ENCODE measurements at regions of chr3 and their contacts with region 1.

Region 1: GRCh38 chr3:9402410-9403228 is 5.2 kb downstream of the SETD5 start:
- DNase-seq: peak; percentile 48
- H3K4me3 Mint-ChIP-seq: peak overlapping the region; percentile 68
- H3K27ac Mint-ChIP-seq: peak overlapping the region; percentile 77
- H3K4me1 Mint-ChIP-seq: peaks cover 46% of the 10 kb centered on the region
- H3K27me3 Mint-ChIP-seq: no peaks in the 10 kb centered on the region
- CTCF ChIP-seq: no peak

Region 2: DNA sequence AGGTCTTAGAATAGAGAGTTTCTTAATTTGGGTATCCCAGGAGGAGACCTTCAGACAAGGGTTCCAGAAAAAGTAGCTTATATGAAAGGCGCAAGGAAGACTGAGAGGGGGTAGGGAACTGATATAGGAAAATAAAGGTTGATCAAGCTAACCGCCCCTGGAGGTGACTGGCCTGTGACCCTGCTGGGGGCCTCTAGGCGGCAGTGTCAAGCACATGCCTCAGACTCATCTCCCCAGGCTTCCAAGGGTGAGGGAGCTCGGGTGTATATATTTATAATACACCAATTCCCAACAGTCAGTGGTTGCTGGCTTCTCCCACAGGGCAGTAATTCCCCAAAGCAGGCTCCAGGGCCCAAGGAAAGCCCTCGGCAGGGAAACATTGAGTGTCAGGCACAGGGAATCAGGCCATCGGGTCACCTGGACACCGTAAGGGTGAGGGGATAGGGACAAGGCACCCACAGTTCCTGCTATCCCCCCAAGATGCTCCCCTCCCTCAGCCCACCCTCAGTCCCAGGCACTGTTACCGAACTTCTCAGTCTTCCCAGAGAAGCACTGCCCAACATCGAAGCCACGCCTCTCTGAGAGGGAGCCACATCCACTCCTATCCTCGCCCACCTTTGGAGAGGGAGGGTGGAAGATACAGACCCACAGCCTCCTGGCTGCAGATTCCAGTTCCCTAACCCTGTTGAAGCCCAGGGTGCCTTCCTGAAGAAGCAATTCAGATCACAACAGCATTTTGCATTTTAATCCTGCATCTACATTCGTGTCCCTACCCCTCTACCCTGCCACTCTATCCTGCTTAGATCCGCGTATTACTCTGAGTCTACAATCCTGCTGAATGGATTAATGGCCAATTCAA is 688.5 kb before region 1 on chr3:
- CTCF ChIA-PET with region 1: no interaction called
- POLR2A ChIA-PET with region 1: no interaction called
- intact Hi-C with region 1: no loop called
- DNase-seq: peak; percentile 47
- H3K4me3 Mint-ChIP-seq: no peak overlapping the region
- H3K27ac Mint-ChIP-seq: no peak overlapping the region
- H3K4me1 Mint-ChIP-seq: peaks cover 25% of the 10 kb centered on the region
- H3K27me3 Mint-ChIP-seq: no peaks in the 10 kb centered on the region
- CTCF ChIP-seq: peak; percentile 38

Region 3: GRCh38 chr3:9102240-9102981 is 300.2 kb before region 1 on chr3:
- CTCF ChIA-PET with region 1: no interaction called
- POLR2A ChIA-PET with region 1: no interaction called
- intact Hi-C with region 1: no loop called
- DNase-seq: no peak
- H3K4me3 Mint-ChIP-seq: no peak overlapping the region
- H3K27ac Mint-ChIP-seq: no peak overlapping the region
- H3K4me1 Mint-ChIP-seq: no peaks in the 10 kb centered on the region
- H3K27me3 Mint-ChIP-seq: no peaks in the 10 kb centered on the region
- CTCF ChIP-seq: no peak

Region 4: GRCh38 chr3:9135930-9136525 is 266.6 kb before region 1 on chr3:
- CTCF ChIA-PET with region 1: no interaction called
- POLR2A ChIA-PET with region 1: no interaction called
- intact Hi-C with region 1: no loop called
- DNase-seq: no peak
- H3K4me3 Mint-ChIP-seq: no peak overlapping the region
- H3K27ac Mint-ChIP-seq: no peak overlapping the region
- H3K4me1 Mint-ChIP-seq: peaks cover 4% of the 10 kb centered on the region
- H3K27me3 Mint-ChIP-seq: no peaks in the 10 kb centered on the region
- CTCF ChIP-seq: no peak

Region 5: DNA sequence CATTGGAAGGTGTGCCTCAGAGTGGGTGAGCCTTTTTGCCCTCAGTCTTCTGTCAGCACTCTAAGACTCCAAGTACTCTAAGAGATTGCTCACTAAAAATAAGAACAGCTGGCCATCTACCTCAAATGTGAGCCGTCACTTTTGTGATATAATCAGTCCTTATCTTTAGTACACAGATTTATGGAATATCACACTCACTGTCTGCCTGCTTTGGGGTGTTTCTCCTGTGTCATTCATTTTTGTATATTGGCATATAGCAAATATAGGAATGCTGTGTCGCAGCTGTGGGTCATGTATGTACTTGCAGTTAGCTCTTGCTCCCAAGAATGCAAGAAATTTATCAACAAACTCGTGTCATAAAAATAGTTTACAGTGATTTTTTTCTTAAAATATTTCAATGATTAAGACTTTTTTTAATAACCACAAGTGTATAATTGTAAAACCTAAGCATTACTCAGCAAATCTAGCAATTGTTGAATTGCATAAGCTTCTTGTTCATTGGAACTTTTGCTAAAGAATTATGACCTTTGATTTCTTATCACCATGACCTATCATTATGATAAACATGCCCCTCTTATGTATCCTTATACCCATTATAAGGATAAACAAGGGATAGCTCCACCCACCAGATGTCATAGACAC is 13.6 kb after region 1 on chr3:
- CTCF ChIA-PET with region 1: interaction called, 7 read pairs
- POLR2A ChIA-PET with region 1: interaction called, 452 read pairs
- intact Hi-C with region 1: no loop called
- DNase-seq: no peak
- H3K4me3 Mint-ChIP-seq: peak overlapping the region; percentile 31
- H3K27ac Mint-ChIP-seq: peak overlapping the region; percentile 31
- H3K4me1 Mint-ChIP-seq: peaks cover 32% of the 10 kb centered on the region
- H3K27me3 Mint-ChIP-seq: no peaks in the 10 kb centered on the region
- CTCF ChIP-seq: no peak

Measured in MCF 10A (cell line).